HEK293 (cell line): ENCODE measurements at regions of chr9 and their contacts with region 1.

Region 1: GRCh38 chr9:131310833-131311554 is 21.5 kb downstream of the PLPP7 start:
- H3K4me3 ChIP-seq: no peak overlapping the region
- H3K27ac ChIP-seq: no peak overlapping the region
- H3K4me1 ChIP-seq: no peaks in the 10 kb centered on the region
- CTCF ChIP-seq: 0 out of 2 replicates have a peak, but pooled peaks have one; percentile 8

Region 2: DNA sequence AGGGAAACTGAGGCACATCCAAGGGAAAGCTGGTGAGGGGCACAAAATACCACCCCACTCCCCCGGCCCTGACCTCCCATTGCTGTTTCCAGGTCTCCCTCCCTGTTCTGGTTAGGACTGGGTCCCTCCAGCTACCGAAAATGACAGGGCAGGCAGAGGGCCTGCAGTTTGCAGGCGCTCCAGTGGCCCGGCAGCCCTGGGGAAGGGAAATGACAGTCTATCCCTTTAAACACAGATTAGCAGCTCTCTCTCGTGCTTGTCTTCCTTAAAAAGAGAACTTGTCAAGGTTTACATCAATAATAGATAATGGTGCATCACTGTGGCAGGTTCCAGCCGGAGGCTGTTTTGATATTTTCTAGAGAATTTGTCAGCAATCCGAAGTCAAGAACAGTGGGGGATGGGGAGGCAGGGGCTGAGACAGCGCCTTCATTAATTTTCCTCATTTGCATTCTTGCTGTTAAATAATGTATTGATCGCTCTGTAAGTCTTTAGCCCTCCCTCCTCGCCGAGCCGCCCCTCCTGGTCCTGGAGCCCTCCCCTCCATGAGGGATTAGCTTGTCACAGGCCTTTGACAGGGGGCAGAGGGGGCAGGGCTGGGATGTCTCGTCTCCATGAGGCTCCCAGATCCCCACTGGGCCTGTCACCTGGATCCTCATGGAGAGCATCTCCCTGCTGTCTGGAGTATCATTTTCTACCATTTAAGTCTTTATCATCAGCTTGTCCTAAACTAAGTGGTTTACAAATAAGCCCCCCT is 473.9 kb after region 1 on chr9:
- CTCF ChIA-PET with region 1: no interaction called
- POLR2A ChIA-PET with region 1: interaction called, 11 read pairs
- H3K4me3 ChIP-seq: no peak overlapping the region
- H3K27ac ChIP-seq: no peak overlapping the region
- H3K4me1 ChIP-seq: no peaks in the 10 kb centered on the region
- CTCF ChIP-seq: no peak